MCF 10A (cell line): ENCODE measurements at regions of chr3 and their contacts with region 1.

Region 1: GRCh38 chr3:58332575-58333188 is at the start of gene PXK:
- DNase-seq: peak; percentile 71
- H3K4me3 Mint-ChIP-seq: peak within 1 kb of the TSS; percentile 78
- H3K27ac Mint-ChIP-seq: peak within 1 kb of the TSS; percentile 93
- H3K4me1 Mint-ChIP-seq: peaks cover 22% of the 10 kb centered on the region
- H3K27me3 Mint-ChIP-seq: no peaks in the 10 kb centered on the region
- CTCF ChIP-seq: no peak
- total RNA-seq, gene PXK: 55.1 and 62.2 TPM in 2 replicates

Region 2: DNA sequence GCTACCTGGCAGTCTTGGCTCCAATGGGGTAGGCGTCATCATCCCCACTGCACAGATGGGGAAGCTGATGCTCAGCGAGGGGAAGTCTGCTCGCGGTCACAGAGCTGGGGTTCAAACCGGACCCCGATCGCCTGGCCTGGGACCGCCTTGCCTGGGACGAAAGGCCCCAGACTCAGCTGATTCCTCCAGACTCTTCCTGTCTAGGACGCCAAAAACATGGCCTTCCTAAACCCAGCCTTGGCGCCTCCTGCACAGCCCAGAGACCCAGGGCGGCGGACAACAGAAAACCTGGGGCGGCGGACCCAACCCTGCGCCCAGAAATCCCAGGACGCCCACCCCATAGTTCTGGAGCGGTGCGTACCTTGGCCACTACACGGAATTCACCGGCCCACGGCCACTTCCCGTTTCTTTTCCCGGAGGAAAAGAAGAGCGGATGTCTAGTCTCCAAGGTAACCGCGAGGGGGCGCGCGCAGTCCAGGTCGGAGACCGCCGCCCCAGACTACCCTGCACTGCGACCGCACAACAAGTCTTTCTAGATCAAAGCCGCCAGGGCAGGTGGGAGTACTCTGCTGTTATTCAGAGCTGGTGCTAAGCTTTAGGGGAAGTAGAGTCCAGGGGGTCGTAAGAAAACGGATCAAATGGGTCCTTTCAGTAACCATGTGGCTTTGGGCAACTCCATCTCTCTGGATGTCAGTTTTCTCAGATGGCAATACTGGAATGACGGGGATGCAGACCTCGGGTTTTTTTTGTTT is 1162.6 kb before region 1 on chr3:
- CTCF ChIA-PET with region 1: no interaction called
- POLR2A ChIA-PET with region 1: no interaction called
- intact Hi-C with region 1: no loop called
- DNase-seq: peak; percentile 80
- H3K4me3 Mint-ChIP-seq: peak overlapping the region; percentile 52
- H3K27ac Mint-ChIP-seq: no peak overlapping the region
- H3K4me1 Mint-ChIP-seq: peaks cover 7% of the 10 kb centered on the region
- H3K27me3 Mint-ChIP-seq: peaks cover 16% of the 10 kb centered on the region
- CTCF ChIP-seq: peak; percentile 81

Region 3: GRCh38 chr3:58349792-58350626 is 17.3 kb after region 1 on chr3:
- CTCF ChIA-PET with region 1: interaction called, 8 read pairs
- POLR2A ChIA-PET with region 1: interaction called, 11 read pairs
- intact Hi-C with region 1: no loop called
- DNase-seq: no peak
- H3K4me3 Mint-ChIP-seq: no peak overlapping the region
- H3K27ac Mint-ChIP-seq: no peak overlapping the region
- H3K4me1 Mint-ChIP-seq: peaks cover 10% of the 10 kb centered on the region
- H3K27me3 Mint-ChIP-seq: no peaks in the 10 kb centered on the region
- CTCF ChIP-seq: no peak

Region 4: GRCh38 chr3:58383904-58384303 is 51.2 kb after region 1 on chr3:
- CTCF ChIA-PET with region 1: interaction called, 5 read pairs
- POLR2A ChIA-PET with region 1: interaction called, 46 read pairs
- intact Hi-C with region 1: loop called (anchors 1 kb)
- DNase-seq: peak; percentile 97
- H3K4me3 Mint-ChIP-seq: peak overlapping the region; percentile 24
- H3K27ac Mint-ChIP-seq: peak overlapping the region; percentile 77
- H3K4me1 Mint-ChIP-seq: peaks cover 25% of the 10 kb centered on the region
- H3K27me3 Mint-ChIP-seq: no peaks in the 10 kb centered on the region
- CTCF ChIP-seq: no peak